ENCODE measurements at regions of chr2 and their contacts with region 1.

Region 1: DNA sequence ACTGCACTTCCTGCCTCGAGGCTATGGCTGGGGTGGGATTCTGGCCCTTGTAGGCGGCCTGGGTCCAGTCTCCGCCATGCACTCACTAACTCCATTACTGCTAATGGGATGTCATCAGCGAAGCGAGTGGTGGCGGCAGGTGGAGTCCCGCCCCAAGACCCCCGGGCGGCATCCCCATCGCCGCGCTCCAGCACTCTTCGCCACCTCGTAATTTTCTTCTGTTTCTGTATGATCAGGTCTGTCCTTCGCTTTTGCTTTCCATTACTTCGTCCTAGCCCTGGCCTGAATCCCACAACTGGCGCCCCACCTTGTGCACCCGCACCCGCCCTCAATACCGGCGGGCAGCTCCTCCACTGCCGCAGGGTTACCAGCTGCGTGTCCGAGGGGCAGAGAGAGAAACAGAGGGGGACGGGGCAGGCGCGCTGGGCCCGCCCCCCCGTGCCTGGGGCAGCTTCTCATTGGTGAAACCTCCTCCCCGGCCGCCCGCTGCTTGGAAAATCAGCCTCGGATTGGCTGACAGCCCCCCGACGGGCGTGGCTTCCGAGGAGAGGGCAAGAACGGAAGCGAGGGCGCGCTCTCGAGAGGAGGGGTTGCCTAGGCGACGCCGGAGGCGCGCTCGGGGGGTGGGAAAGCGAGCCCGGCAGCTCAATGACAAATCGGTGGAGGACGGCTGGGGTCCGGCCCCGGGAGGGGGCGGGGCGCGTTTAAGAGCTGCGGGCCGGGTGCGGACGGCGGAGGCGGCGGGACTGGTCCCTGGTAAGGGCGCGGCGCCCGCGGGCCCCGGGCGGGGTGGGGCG is at the start of gene RALB:
- DNase-seq: peak; percentile 99
- ATAC-seq: peak; percentile 79
- H3K4me3 ChIP-seq: peak within 1 kb of the TSS; percentile 94
- H3K27ac ChIP-seq: peak within 1 kb of the TSS; percentile 81
- H3K4me1 ChIP-seq: peaks cover 29% of the 10 kb centered on the region
- H3K27me3 ChIP-seq: no peaks in the 10 kb centered on the region
- CTCF ChIP-seq: no peak
- total RNA-seq, gene RALB: 49.1 and 57.9 TPM in 2 replicates

Region 2: DNA sequence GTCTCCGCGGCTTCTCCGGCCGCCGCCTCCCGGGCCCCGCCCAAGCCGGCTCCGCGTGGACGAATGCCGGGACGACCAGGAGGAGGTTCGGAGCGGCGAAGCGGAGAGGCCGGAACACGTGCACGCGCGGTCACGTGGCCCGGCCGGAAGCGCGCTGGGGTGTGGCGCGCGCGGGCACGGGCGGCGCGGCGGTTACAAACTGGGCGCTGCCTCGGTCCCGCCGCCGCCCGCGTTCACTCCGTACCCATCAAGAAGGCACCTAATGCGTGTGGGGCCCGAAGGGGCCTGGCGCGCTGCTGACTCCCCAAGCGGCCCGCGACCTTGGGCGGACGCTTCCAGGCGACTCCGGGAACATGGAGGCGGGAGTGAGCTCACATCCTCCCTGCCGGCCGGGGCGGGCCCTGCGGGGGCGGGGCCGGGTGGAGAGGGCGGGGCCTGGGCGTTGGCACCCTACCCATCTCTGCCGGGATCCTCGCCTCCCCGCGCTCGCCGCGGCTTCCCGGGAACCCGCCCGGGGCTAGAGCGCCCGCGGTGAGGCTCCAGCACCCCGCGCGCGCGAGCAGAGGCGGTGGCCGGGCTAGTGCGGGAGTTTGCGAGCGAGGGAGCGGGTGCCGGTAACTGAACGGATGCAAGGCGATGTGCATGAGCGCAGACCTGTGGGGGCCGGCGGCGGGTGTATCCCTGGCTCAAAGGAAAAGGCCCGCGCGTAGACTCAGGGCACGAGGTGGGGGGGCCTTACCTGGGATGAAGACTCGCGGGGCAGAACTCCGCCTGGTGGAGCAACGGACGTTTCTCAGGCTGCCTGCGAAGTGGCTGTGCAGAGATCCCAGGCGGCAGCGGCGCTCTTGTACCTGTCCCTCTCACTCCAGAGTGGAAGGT is 29.1 kb before region 1 on chr2 and contains the start of gene TMEM185B:
- CTCF ChIA-PET with region 1: no interaction called
- POLR2A ChIA-PET with region 1: interaction called, 5 read pairs
- intact Hi-C with region 1: loop called (anchors 1 kb)
- DNase-seq: peak; percentile 88
- ATAC-seq: peak; percentile 91
- H3K4me3 ChIP-seq: peak within 1 kb of the TSS; percentile 70
- H3K27ac ChIP-seq: peak within 1 kb of the TSS; percentile 79
- H3K4me1 ChIP-seq: peaks cover 45% of the 10 kb centered on the region
- H3K27me3 ChIP-seq: no peaks in the 10 kb centered on the region
- CTCF ChIP-seq: peak; percentile 56
- total RNA-seq, gene TMEM185B: 67.5 and 83.6 TPM in 2 replicates

Region 3: GRCh38 chr2:120287183-120288015 is 35.0 kb after region 1 on chr2:
- CTCF ChIA-PET with region 1: no interaction called
- POLR2A ChIA-PET with region 1: no interaction called
- intact Hi-C with region 1: loop called (anchors 1 kb)
- DNase-seq: peak; percentile 91
- ATAC-seq: peak; percentile 92
- H3K4me3 ChIP-seq: peak overlapping the region; percentile 34
- H3K27ac ChIP-seq: peak overlapping the region; percentile 88
- H3K4me1 ChIP-seq: peaks cover 39% of the 10 kb centered on the region
- H3K27me3 ChIP-seq: no peaks in the 10 kb centered on the region
- CTCF ChIP-seq: no peak